H1 (cell line): ENCODE measurements at regions of chr10 and their contacts with region 1.

Region 1: GRCh38 chr10:71367271-71367670 is 29.4 kb upstream of the CDH23 start:
- DNase-seq: no peak
- H3K4me3 ChIP-seq: no peak overlapping the region
- H3K27ac ChIP-seq: no peak overlapping the region
- H3K4me1 ChIP-seq: no peaks in the 10 kb centered on the region
- H3K27me3 ChIP-seq: no peaks in the 10 kb centered on the region; a peak in 2 of 7 replicates
- CTCF ChIP-seq: no peak
- EP300 ChIP-seq: no peak
- POLR2A ChIP-seq: no peak
- RAD21 ChIP-seq: no peak

Region 2: GRCh38 chr10:71343392-71343773 is 23.9 kb before region 1 on chr10:
- CTCF ChIA-PET with region 1: interaction called, 11 read pairs
- POLR2A ChIA-PET with region 1: interaction called, 3 read pairs
- DNase-seq: no peak
- H3K4me3 ChIP-seq: no peak overlapping the region
- H3K27ac ChIP-seq: peak overlapping the region; percentile 60; the same call in 1 of the 2 replicates
- H3K4me1 ChIP-seq: peaks cover 19 to 34% (median 27%) of the 10 kb centered on the region in 4 experiments
- H3K27me3 ChIP-seq: no peaks in the 10 kb centered on the region
- CTCF ChIP-seq: no peak
- EP300 ChIP-seq: no peak
- POLR2A ChIP-seq: no peak
- RAD21 ChIP-seq: no peak

Region 3: DNA sequence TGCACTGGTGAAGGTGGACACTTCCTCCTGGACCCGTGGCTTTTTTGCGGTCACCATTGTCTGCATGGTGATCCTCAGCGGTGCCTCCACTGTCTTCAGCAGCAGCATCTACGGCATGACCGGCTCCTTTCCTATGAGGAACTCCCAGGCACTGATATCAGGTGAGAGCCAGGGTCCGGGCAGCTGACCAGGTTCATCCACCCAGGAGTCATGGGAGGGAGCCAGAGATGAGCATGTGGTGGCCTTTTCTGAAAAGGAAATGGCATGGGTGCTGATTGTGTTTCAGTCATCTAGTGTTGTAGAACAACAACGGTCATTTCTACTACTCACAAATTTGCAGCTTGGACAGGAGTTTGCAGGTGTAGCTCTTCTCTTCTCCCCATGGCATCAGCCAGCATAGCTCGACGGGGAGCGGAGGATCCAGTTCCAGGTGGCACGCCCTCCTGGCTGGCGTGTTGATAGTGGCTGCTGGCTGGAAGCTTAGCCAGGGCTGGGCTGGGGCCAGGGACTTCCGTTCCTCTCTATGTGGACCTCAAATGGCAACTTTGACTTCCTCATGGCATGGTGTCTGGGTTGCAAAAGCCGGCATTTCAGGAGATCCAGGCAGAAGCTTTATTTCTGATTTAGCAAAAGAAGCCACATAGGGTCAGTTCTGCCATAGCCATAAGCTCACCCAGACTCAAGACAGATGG is 15.5 kb before region 1 on chr10:
- CTCF ChIA-PET with region 1: interaction called, 15 read pairs
- POLR2A ChIA-PET with region 1: interaction called, 4 read pairs
- DNase-seq: no peak
- H3K4me3 ChIP-seq: no peak overlapping the region
- H3K27ac ChIP-seq: no peak overlapping the region
- H3K4me1 ChIP-seq: peaks cover 0 to 16% (median 7%) of the 10 kb centered on the region in 4 experiments; a peak in 4 of 7 replicates
- H3K27me3 ChIP-seq: no peaks in the 10 kb centered on the region
- CTCF ChIP-seq: no peak
- EP300 ChIP-seq: no peak
- POLR2A ChIP-seq: no peak
- RAD21 ChIP-seq: no peak

Region 4: GRCh38 chr10:71424496-71425194 is 57.4 kb after region 1 on chr10:
- CTCF ChIA-PET with region 1: no interaction called
- POLR2A ChIA-PET with region 1: no interaction called
- DNase-seq: peak in 1 of 2 experiments; percentile 43
- H3K4me3 ChIP-seq: no peak overlapping the region
- H3K27ac ChIP-seq: no peak overlapping the region
- H3K4me1 ChIP-seq: peaks cover 0 to 2% (median 2%) of the 10 kb centered on the region in 4 experiments; a peak in 3 of 7 replicates
- H3K27me3 ChIP-seq: peaks cover 0 to 4% (median under 1%) of the 10 kb centered on the region in 4 experiments; a peak in 3 of 7 replicates
- CTCF ChIP-seq: no peak
- EP300 ChIP-seq: no peak
- POLR2A ChIP-seq: no peak
- RAD21 ChIP-seq: no peak

Region 5: GRCh38 chr10:71435571-71436267 is 68.4 kb after region 1 on chr10:
- CTCF ChIA-PET with region 1: no interaction called
- POLR2A ChIA-PET with region 1: no interaction called
- DNase-seq: peak in 1 of 2 experiments; percentile 43
- H3K4me3 ChIP-seq: no peak overlapping the region
- H3K27ac ChIP-seq: no peak overlapping the region
- H3K4me1 ChIP-seq: peaks cover 0 to 2% (median 0%) of the 10 kb centered on the region in 4 experiments; a peak in 2 of 7 replicates
- H3K27me3 ChIP-seq: no peaks in the 10 kb centered on the region
- CTCF ChIP-seq: no peak
- EP300 ChIP-seq: no peak
- POLR2A ChIP-seq: no peak
- RAD21 ChIP-seq: no peak